Left colon (tissue), 2 donors: ENCODE measurements at regions of chr10 and their contacts with region 1.

Region 1: DNA sequence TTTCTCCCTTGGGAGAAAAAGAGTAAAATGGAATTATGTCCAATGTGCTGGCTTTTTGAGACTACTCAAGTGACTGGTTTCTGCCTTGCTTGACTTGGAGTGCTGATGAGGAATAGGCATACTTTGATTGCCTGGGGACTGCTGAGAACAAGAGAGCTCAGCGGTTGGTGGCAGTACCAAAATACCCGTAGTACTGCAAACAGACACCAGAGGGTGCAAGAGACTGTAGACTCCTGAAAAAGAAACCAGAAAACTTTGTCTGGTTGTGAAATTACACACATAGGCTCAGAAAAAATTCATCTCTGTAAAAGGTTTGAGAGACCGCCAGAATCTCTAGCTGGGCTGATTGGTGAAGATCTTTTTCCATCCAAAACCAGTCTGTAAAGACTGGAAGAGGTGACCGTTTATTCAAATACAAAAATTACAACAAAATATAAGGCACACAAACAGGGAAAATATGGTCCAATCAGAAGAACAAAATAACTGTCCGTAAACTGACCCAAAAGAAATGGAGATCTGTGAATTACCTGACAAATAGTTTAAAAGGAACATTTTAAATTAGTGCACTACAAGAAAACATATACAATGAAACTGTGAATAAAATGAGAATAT is 18.5 kb downstream of the BICC1 start:
- DNase-seq: peak; percentile 28 to 65
- ATAC-seq: peak; percentile 77

Region 2: GRCh38 chr10:57905861-57906260 is 625.3 kb before region 1 on chr10:
- intact Hi-C with region 1: no loop called
- DNase-seq: no peak
- ATAC-seq: no peak

Region 3: GRCh38 chr10:59181668-59182067 is 650.5 kb after region 1 on chr10:
- intact Hi-C with region 1: loop called in 1 of 2 experiments (anchors 10 kb)
- DNase-seq: no peak
- ATAC-seq: peak; percentile 89